ENCODE measurements at regions of chr18 and their contacts with region 1.

Region 1: DNA sequence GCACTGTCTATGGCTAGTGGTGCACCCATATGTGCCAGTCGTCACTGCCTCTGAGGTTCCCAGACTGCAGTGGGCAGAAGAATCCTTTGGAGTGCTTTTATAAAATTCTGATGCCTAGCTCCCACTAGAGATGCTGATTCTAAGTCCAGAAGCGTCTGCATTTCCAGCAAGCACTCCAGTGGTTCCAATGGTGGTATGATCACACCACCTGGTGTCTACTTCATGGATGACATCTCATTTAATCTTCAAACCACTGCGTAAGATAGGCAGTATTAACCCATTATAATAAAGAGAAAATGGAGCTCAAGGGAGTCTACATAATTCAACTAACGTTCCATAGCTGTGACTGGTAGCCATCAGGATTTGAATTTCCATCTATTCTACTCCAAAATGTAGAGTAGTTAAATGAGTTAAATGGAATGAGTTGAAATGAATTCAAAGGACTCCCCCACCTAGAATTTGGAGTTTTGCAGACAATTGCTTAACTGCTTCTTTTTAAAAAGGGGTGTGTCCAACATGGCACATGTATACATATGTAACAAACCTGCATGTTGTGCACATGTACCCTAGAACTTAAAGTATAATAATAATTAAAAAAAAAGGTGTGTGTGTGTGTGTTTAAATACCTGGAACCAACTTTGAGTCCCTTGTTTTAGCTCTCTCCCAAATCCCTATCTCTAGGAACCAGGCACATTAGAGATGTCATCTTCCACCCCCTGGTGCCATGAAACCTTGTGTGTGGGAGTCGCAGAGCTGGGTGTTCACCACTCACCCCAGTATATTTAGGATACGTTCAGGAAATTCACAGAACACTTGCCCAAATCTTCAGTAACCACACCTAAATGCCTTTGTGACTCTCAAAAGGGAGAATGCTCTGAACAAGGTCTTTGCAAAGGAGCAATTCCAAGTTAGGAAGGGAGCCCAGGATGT is 14.1 kb downstream of the LAMA3 start:
- DNase-seq: peak; percentile 59
- H3K4me3 Mint-ChIP-seq: no peak overlapping the region
- H3K27ac Mint-ChIP-seq: no peak overlapping the region
- H3K4me1 Mint-ChIP-seq: peaks cover 36% of the 10 kb centered on the region
- H3K27me3 Mint-ChIP-seq: no peaks in the 10 kb centered on the region
- CTCF ChIP-seq: peak; percentile 72

Region 2: GRCh38 chr18:23038712-23039111 is 664.6 kb before region 1 on chr18:
- CTCF ChIA-PET with region 1: no interaction called
- intact Hi-C with region 1: no loop called
- DNase-seq: no peak
- H3K4me3 Mint-ChIP-seq: no peak overlapping the region
- H3K27ac Mint-ChIP-seq: no peak overlapping the region
- H3K4me1 Mint-ChIP-seq: peaks cover 8% of the 10 kb centered on the region
- H3K27me3 Mint-ChIP-seq: no peaks in the 10 kb centered on the region
- CTCF ChIP-seq: no peak

Region 3: GRCh38 chr18:23317975-23318675 is 385.2 kb before region 1 on chr18:
- CTCF ChIA-PET with region 1: no interaction called
- intact Hi-C with region 1: no loop called
- DNase-seq: no peak
- H3K4me3 Mint-ChIP-seq: no peak overlapping the region
- H3K27ac Mint-ChIP-seq: no peak overlapping the region
- H3K4me1 Mint-ChIP-seq: peaks cover 32% of the 10 kb centered on the region
- H3K27me3 Mint-ChIP-seq: no peaks in the 10 kb centered on the region
- CTCF ChIP-seq: no peak

Region 4: DNA sequence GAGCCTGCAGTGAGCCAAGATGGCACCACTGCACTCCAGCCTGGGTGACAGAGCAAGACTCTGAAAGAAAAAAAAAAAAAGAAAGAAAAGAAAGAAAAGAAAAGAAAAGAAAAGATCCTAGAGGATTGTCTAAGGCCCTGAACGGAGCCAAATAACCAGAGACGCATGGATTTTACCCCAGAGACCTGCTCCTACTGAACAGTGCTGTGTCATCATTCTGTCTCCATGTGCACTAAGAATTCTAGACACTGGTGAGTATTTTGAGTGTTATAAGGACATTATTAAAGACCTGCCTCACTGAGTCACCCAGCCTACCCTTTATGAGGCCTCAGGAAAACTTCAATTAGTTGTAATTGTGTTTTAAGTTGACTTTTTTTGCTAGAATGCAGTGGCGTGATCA is 312.2 kb before region 1 on chr18:
- CTCF ChIA-PET with region 1: no interaction called
- intact Hi-C with region 1: no loop called
- DNase-seq: no peak
- H3K4me3 Mint-ChIP-seq: no peak overlapping the region
- H3K27ac Mint-ChIP-seq: no peak overlapping the region
- H3K4me1 Mint-ChIP-seq: peaks cover 7% of the 10 kb centered on the region
- H3K27me3 Mint-ChIP-seq: no peaks in the 10 kb centered on the region
- CTCF ChIP-seq: no peak

Region 5: DNA sequence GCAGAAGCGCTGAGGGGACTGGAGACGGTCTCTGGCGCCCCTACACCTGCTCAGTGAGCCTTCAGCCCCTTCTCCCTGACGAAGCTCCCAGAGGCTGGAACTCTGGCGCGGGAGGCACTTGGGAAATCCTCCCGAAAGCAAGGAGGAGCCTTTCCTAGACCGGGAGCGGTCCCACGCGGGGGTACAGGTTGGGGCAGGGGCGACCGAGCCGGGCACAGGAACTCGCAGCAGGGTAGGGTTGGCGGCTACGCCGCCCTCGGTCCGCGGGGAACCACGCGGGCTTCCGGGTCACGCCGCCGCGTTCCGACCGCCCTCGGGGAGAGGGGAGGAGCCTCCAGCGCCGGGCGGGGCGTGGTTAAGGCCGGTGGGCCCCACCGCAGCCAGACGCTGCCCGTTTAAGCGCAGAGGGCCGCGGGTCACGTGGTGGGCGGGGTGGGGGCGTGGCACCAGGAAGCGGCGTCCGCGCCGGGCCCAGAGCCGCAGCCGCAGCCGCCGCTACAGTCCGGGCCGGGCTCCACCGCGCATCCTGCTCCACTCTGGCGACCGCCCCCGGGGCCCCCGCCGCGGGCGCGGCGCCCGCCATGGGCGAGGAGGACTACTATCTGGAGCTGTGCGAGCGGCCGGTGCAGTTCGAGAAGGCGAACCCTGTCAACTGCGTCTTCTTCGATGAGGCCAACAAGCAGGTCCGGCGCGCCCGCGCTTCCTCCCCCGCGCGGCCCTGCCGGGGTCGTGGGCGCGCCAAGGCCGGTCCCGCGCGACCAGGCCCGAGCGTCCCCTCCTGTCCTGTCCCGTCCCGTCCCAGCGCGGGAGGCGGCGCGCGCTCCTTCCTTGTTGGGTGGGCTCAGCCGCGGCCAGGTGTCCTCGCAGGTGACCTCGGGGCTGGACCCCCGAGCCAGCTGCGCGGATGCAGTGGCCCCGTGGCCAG is 200.0 kb before region 1 on chr18 and contains the start of gene RMC1:
- CTCF ChIA-PET with region 1: interaction called, 5 read pairs
- intact Hi-C with region 1: loop called (anchors 5 kb)
- DNase-seq: peak; percentile 98
- H3K4me3 Mint-ChIP-seq: peak within 1 kb of the TSS; percentile 96
- H3K27ac Mint-ChIP-seq: peak within 1 kb of the TSS; percentile 87
- H3K4me1 Mint-ChIP-seq: peaks cover 17% of the 10 kb centered on the region
- H3K27me3 Mint-ChIP-seq: no peaks in the 10 kb centered on the region
- CTCF ChIP-seq: no peak
- total RNA-seq, gene RMC1: 31.0 and 33.7 TPM in 2 replicates

Region 6: DNA sequence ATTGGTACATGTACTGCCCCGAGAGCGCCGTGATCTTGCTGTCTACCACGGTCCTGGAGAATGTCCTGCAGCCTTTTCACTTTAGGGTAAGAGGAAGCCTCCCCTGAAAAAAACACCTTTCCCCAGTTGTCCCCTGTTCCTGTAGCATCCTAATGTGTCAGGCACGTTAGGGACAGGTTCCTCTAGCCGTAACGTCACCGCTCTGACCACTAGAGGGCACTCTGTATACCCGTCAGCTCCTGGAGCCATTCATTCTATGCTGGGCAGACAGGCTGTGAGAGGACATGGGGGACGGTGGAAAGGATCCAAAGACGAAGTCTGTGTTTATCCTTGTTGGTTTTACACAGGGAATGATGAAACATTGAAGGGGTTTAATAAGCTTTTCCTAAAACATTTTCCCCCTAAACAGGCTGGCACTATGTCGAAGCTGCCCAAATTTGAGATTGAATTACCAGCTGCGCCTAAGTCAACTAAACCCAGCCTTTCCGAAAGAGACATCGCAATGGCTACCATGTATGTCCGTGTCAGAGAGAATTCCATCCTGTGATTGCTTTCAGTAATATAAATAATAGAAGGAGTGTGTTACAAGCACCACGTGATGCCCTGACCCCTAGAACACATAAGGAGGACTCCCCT is 187.3 kb before region 1 on chr18:
- CTCF ChIA-PET with region 1: interaction called, 3 read pairs
- intact Hi-C with region 1: loop called (anchors 5 kb)
- DNase-seq: peak; percentile 79
- H3K4me3 Mint-ChIP-seq: no peak overlapping the region
- H3K27ac Mint-ChIP-seq: no peak overlapping the region
- H3K4me1 Mint-ChIP-seq: peaks cover 8% of the 10 kb centered on the region
- H3K27me3 Mint-ChIP-seq: no peaks in the 10 kb centered on the region
- CTCF ChIP-seq: peak; percentile 88

Region 7: GRCh38 chr18:23619388-23619881 is 83.9 kb before region 1 on chr18:
- CTCF ChIA-PET with region 1: interaction called, 30 read pairs
- intact Hi-C with region 1: loop called (anchors 1 kb)
- DNase-seq: no peak
- H3K4me3 Mint-ChIP-seq: peak overlapping the region; percentile 61
- H3K27ac Mint-ChIP-seq: peak overlapping the region; percentile 2
- H3K4me1 Mint-ChIP-seq: peaks cover 49% of the 10 kb centered on the region
- H3K27me3 Mint-ChIP-seq: no peaks in the 10 kb centered on the region
- CTCF ChIP-seq: no peak

Region 8: GRCh38 chr18:23629444-23629946 is 73.8 kb before region 1 on chr18:
- CTCF ChIA-PET with region 1: interaction called, 49 read pairs
- intact Hi-C with region 1: no loop called
- DNase-seq: peak; percentile 61
- H3K4me3 Mint-ChIP-seq: no peak overlapping the region
- H3K27ac Mint-ChIP-seq: peak overlapping the region; percentile 86
- H3K4me1 Mint-ChIP-seq: peaks cover 50% of the 10 kb centered on the region
- H3K27me3 Mint-ChIP-seq: no peaks in the 10 kb centered on the region
- CTCF ChIP-seq: peak; percentile 22

Region 9: DNA sequence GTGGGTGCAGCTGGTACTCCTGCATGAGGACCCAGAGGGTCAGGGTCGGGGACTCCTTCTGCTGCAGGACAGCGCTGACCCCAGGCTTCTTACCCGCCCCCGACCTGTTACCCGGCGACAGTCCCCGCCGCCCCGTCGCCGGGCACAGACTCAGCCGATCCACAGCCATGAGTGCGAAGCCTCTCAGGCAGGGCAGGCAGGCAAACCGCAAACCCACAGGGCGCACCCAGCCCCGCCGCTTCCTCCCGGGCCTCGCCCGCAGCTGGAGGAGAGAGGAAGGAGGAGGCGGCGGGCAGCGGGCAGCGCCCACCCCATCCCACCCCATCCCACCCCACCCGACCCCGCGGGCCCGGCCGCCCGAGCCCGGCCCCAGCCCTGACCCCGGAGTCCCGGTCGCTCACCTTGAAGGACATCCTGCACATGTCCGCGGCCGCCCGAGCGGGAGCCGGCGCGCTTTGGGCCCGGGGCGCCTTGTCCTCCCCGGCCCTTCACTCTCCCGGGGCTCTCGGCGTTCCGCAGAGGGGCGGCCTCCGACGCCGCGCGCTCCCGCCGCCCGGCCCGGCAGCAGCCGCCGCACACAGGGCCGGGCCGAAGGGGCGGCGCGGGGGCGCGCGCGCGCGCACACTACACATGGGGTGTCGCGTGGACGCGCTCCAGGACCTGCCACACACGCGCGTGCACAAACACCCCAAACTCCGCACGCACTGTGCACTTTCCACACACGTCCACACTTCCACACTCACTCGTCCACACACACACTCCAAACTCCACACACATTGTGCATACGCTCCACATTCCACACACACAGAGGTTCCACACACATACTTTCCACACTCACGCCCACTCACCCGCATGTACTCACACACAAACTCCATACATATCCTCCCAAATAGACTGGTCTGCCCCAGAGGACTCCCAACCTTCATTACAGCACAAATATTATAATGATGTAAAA is 40.7 kb before region 1 on chr18 and contains the start of gene ANKRD29:
- CTCF ChIA-PET with region 1: interaction called, 3 read pairs
- intact Hi-C with region 1: loop called (anchors 1 kb)
- DNase-seq: peak; percentile 73
- H3K4me3 Mint-ChIP-seq: peak within 1 kb of the TSS; percentile 79
- H3K27ac Mint-ChIP-seq: peak within 1 kb of the TSS; percentile 38
- H3K4me1 Mint-ChIP-seq: peaks cover 18% of the 10 kb centered on the region
- H3K27me3 Mint-ChIP-seq: peaks cover 17% of the 10 kb centered on the region
- CTCF ChIP-seq: no peak
- total RNA-seq, gene ANKRD29: 6.9 and 7.8 TPM in 2 replicates

Region 10: DNA sequence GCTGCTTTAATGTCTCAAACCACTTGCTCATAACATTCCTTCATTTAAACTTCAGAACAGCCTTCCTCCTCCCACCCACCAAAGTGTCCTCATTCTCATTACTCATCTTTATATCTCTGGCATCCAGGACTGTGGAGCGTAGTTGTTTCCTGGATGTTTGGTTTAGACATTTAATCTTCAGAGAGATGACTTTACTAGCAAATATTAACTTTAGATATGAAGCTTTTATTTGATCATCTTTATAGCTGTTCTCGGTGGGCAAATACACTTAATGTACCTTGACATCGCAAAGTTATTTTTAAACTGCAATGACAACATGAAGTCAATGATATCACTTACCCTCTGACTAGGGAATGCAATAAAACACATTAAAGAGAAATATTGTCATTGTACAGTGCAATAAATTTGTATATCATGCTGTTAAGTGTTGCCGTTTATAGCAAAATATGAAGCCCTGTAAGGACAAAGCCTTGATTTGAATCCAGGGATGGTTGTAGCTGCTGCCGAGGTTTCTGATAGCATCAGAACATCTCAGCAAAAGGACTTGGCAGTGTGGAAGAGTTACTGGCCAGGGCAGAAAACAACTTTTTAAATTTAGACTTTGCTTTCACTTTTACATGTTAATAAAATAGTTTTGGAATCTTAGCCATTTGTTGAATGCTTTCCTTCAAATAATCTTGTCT is 18.7 kb before region 1 on chr18:
- CTCF ChIA-PET with region 1: no interaction called
- intact Hi-C with region 1: no loop called
- DNase-seq: no peak
- H3K4me3 Mint-ChIP-seq: no peak overlapping the region
- H3K27ac Mint-ChIP-seq: no peak overlapping the region
- H3K4me1 Mint-ChIP-seq: peaks cover 9% of the 10 kb centered on the region
- H3K27me3 Mint-ChIP-seq: peaks cover under 1% of the 10 kb centered on the region
- CTCF ChIP-seq: no peak

Region 11: GRCh38 chr18:23812546-23813440 is 109.5 kb after region 1 on chr18:
- CTCF ChIA-PET with region 1: no interaction called
- intact Hi-C with region 1: loop called (anchors 5 kb)
- DNase-seq: no peak
- H3K4me3 Mint-ChIP-seq: no peak overlapping the region
- H3K27ac Mint-ChIP-seq: no peak overlapping the region
- H3K4me1 Mint-ChIP-seq: peaks cover 8% of the 10 kb centered on the region
- H3K27me3 Mint-ChIP-seq: no peaks in the 10 kb centered on the region
- CTCF ChIP-seq: peak; percentile 20

Measured in Calu3 (cell line).